ENCODE measurements at regions of chr1 and their contacts with region 1.

Region 1: GRCh38 chr1:155135415-155136028 is at the start of gene SLC50A1:
- DNase-seq: peak; percentile 94
- H3K4me3 Mint-ChIP-seq: peak within 1 kb of the TSS; percentile 80
- H3K27ac Mint-ChIP-seq: peak within 1 kb of the TSS; percentile 94
- H3K4me1 Mint-ChIP-seq: peaks cover 50% of the 10 kb centered on the region
- H3K27me3 Mint-ChIP-seq: no peaks in the 10 kb centered on the region
- CTCF ChIP-seq: no peak
- total RNA-seq, gene SLC50A1: 91.2 and 97.8 TPM in 2 replicates

Region 2: GRCh38 chr1:154925335-154926170 is 210.0 kb before region 1 on chr1:
- CTCF ChIA-PET with region 1: no interaction called
- POLR2A ChIA-PET with region 1: no interaction called
- intact Hi-C with region 1: no loop called
- DNase-seq: no peak
- H3K4me3 Mint-ChIP-seq: no peak overlapping the region
- H3K27ac Mint-ChIP-seq: no peak overlapping the region
- H3K4me1 Mint-ChIP-seq: no peaks in the 10 kb centered on the region
- H3K27me3 Mint-ChIP-seq: no peaks in the 10 kb centered on the region
- CTCF ChIP-seq: no peak

Region 3: GRCh38 chr1:155117617-155118016 is 17.9 kb before region 1 on chr1:
- CTCF ChIA-PET with region 1: interaction called, 6 read pairs
- POLR2A ChIA-PET with region 1: interaction called, 238 read pairs
- intact Hi-C with region 1: no loop called
- DNase-seq: no peak
- H3K4me3 Mint-ChIP-seq: no peak overlapping the region
- H3K27ac Mint-ChIP-seq: no peak overlapping the region
- H3K4me1 Mint-ChIP-seq: no peaks in the 10 kb centered on the region
- H3K27me3 Mint-ChIP-seq: no peaks in the 10 kb centered on the region
- CTCF ChIP-seq: no peak